ENCODE measurements at regions of chr6 and their contacts with region 1.

Region 1: GRCh38 chr6:16505711-16506357 is 255.4 kb downstream of the ATXN1 start:
- DNase-seq: no peak
- H3K4me3 ChIP-seq: no peak overlapping the region
- H3K27ac ChIP-seq: no peak overlapping the region
- H3K4me1 ChIP-seq: no peaks in the 10 kb centered on the region
- CTCF ChIP-seq: no peak

Region 2: DNA sequence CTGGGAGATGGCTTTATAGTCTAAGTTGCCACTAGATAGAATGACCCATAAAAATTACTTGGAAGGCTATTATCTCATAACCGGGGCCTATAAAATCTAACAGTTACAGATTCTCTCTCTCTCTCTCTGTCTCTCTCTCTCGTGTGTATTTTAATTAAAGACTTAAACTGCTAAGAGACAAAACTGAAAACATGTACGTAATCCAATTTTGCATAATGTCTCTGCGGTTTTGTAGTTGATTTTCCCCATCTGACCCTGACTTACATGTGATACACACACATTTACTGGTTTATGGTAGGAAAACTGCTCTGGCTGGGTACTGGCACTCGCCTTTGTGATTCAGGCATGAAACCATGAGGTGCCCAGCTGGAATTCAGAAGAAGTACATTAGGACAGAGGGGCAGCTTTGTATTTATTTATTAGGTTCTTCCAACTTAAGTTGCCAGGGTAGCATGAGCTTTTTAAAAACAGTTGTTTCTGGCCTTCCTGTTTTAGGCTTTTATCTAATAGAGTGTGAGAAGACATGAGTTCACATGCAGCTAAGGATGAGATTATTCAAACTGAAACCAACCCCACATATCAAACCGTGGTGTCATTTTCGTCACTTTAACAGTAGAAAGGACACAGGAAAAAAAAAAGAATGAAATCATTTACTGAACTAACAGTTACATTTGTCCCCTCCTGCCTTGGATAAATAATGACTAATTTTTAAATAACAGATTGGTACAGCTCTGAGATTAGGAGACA is 84.9 kb before region 1 on chr6:
- CTCF ChIA-PET with region 1: no interaction called
- POLR2A ChIA-PET with region 1: interaction called, 11 read pairs
- intact Hi-C with region 1: no loop called
- DNase-seq: peak; percentile 30
- H3K4me3 ChIP-seq: peak overlapping the region; percentile 25
- H3K27ac ChIP-seq: peak overlapping the region; percentile 34
- H3K4me1 ChIP-seq: peaks cover 26% of the 10 kb centered on the region
- CTCF ChIP-seq: no peak

Region 3: GRCh38 chr6:16800942-16801341 is 295.1 kb after region 1 on chr6:
- CTCF ChIA-PET with region 1: no interaction called
- POLR2A ChIA-PET with region 1: no interaction called
- intact Hi-C with region 1: no loop called
- DNase-seq: no peak
- H3K4me3 ChIP-seq: no peak overlapping the region
- H3K27ac ChIP-seq: no peak overlapping the region
- H3K4me1 ChIP-seq: no peaks in the 10 kb centered on the region
- CTCF ChIP-seq: no peak

Measured in OCI-LY7 (cell line).